Endothelial cell of umbilical vein (primary cell): ENCODE measurements at regions of chr1 and their contacts with region 1.

Region 1: DNA sequence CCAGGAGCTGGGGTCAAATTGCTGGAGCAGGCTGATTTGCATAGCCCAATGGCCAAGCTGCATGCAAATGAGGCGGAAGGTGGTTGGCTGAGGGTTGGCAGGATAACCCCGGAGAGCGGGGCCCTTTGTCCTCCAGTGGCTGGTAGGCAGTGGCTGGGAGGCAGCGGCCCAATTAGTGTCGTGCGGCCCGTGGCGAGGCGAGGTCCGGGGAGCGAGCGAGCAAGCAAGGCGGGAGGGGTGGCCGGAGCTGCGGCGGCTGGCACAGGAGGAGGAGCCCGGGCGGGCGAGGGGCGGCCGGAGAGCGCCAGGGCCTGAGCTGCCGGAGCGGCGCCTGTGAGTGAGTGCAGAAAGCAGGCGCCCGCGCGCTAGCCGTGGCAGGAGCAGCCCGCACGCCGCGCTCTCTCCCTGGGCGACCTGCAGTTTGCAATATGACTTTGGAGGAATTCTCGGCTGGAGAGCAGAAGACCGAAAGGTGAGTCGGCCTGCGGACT is at the start of gene GADD45A:
- DNase-seq: peak; percentile 99
- H3K4me3 ChIP-seq: peak within 1 kb of the TSS; percentile 77 to 85 (median 83)
- H3K27ac ChIP-seq: peak within 1 kb of the TSS; percentile 90
- H3K4me1 ChIP-seq: peaks cover 43% of the 10 kb centered on the region
- H3K27me3 ChIP-seq: no peaks in the 10 kb centered on the region
- CTCF ChIP-seq: no peak
- POLR2A ChIP-seq: peak; percentile 100
- total RNA-seq, gene GADD45A: 77.4 and 91.6 TPM in 2 replicates

Region 2: DNA sequence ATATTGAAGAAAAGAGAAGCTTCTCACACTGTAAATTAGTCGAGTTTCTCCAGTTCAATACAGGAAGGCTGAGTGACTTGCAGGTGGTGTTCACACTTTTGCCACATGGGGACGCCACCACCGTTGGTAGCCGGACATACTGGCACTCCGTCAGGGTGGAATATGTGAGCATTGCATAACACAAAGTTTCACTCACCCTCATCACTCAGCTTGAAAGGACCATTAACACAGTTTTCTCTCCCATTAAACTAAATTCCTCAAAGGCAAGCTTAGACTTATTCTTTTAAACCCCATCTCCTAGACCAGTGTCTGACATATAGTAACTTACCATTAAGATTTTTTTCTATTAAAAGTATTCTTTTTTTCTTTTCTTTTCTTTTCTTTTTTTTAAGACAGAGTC is 149.6 kb before region 1 on chr1:
- CTCF ChIA-PET with region 1: interaction called, 64 read pairs
- POLR2A ChIA-PET with region 1: interaction called, 4 read pairs
- dilution Hi-C with region 1: no loop called
- intact Hi-C with region 1: loop called (anchors 1 kb)
- DNase-seq: peak; percentile 92
- H3K4me3 ChIP-seq: no peak overlapping the region
- H3K27ac ChIP-seq: no peak overlapping the region
- H3K4me1 ChIP-seq: peaks cover 10% of the 10 kb centered on the region
- H3K27me3 ChIP-seq: no peaks in the 10 kb centered on the region
- CTCF ChIP-seq: peak; percentile 93 to 94
- POLR2A ChIP-seq: no peak

Region 3: GRCh38 chr1:67590329-67590728 is 94.8 kb before region 1 on chr1:
- CTCF ChIA-PET with region 1: no interaction called
- POLR2A ChIA-PET with region 1: no interaction called
- dilution Hi-C with region 1: no loop called
- intact Hi-C with region 1: loop called (anchors 1 kb)
- DNase-seq: peak; percentile 97
- H3K4me3 ChIP-seq: no peak overlapping the region
- H3K27ac ChIP-seq: peak overlapping the region; percentile 38
- H3K4me1 ChIP-seq: peaks cover 3% of the 10 kb centered on the region
- H3K27me3 ChIP-seq: no peaks in the 10 kb centered on the region
- CTCF ChIP-seq: no peak
- POLR2A ChIP-seq: no peak

Region 4: DNA sequence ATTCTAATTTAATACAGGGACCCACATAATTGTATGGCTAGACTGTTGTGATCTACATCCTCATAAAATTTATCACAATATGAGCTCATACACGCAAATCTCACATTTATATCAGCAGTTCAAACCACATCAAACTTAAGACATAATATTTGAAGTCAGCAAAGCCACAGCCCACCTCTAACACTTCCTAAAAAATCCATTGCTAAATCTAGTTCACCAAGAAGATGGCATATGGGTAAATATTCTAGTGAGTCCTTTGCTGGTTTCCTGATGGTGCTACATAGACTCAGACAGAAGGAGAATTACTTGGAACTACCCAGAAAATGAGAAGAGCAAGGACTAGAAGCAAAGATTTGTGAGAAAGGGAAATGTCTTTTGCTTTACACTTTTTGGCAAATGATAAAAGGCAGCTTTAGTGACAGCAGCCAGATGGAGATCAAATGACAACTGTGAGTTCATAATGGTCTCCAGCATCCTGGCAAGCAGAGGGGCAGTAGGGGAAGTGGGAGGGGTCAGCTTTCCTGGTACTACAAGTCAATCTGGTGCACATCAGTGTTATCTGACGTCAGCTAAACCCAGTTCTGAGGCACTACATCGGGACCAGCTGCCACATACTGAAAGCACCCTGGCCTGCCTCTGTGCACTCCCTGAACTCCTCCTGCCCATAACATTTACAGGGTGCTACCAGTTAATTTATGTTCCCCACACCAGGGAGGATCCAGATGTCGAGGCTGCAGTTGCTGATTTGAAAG is 10.7 kb before region 1 on chr1:
- CTCF ChIA-PET with region 1: interaction called, 12 read pairs
- POLR2A ChIA-PET with region 1: interaction called, 22 read pairs
- dilution Hi-C with region 1: no loop called
- intact Hi-C with region 1: loop called (anchors 1 kb)
- DNase-seq: peak; percentile 96
- H3K4me3 ChIP-seq: no peak overlapping the region
- H3K27ac ChIP-seq: peak overlapping the region; percentile 69
- H3K4me1 ChIP-seq: peaks cover 18% of the 10 kb centered on the region
- H3K27me3 ChIP-seq: no peaks in the 10 kb centered on the region
- CTCF ChIP-seq: no peak
- POLR2A ChIP-seq: no peak

Region 5: DNA sequence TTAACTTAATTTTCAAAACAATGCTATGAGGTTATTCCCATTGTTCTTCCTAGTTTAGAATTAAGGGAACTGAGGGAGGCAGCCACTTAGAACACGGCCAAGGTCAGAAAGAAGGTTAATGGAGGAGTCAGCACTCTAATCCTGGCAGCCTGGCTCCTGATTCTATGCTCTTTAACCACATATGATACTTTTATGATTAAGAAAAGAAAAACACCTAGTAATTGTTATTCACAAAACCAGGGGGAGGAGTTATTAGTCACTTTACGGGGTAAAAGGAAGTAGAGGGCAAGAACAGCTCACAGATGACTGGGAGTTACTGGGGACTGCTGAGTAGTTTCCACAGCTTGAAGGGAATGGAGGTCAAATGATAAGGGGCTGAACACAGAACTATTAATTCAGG is 38.5 kb after region 1 on chr1:
- CTCF ChIA-PET with region 1: interaction called, 6 read pairs
- POLR2A ChIA-PET with region 1: interaction called, 7 read pairs
- dilution Hi-C with region 1: no loop called
- intact Hi-C with region 1: loop called (anchors 1 kb)
- DNase-seq: peak; percentile 97
- H3K4me3 ChIP-seq: peak overlapping the region in 1 of 3 experiments; percentile 17
- H3K27ac ChIP-seq: peak overlapping the region; percentile 95
- H3K4me1 ChIP-seq: peaks cover 68% of the 10 kb centered on the region
- H3K27me3 ChIP-seq: no peaks in the 10 kb centered on the region
- CTCF ChIP-seq: no peak
- POLR2A ChIP-seq: peak; percentile 40

Region 6: DNA sequence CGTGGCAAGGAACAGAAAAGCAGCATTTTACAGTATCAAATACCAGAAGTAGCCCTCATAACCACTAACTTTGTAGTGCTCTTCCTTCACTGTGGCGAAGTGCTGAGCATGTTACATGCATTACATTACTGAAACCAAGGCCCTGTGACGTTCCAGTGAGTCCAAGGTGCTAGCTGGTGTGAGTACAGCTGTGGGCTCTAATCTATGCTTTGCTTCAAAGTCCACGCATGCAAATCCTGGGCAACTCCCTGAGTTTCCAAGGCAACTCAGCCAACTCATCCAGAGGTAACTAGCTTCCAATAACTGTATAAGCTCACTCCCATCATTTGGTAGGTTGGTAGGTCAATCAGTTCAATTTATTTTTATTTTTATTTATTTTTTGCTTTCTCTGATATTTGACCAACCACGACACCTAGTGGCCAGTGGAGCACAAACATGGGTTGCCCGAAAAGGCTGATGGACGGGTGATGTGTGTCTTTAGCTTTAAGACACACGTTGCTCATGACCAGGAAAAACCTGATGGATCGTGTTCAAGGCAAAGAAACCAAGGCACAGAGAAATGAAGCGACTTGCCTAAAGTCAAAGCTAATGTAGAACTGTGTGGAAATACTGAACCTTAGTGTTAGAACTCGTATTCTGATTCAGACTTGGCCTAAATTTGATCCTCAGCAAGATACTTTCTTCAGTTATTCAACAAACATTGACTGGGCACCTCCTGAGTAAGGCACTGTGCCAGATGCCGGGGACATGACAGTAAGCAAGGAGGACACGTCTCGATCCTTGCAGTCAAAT is 75.1 kb after region 1 on chr1:
- CTCF ChIA-PET with region 1: interaction called, 87 read pairs
- POLR2A ChIA-PET with region 1: interaction called, 20 read pairs
- dilution Hi-C with region 1: no loop called
- intact Hi-C with region 1: loop called (anchors 1 kb)
- DNase-seq: peak; percentile 78
- H3K4me3 ChIP-seq: no peak overlapping the region
- H3K27ac ChIP-seq: peak overlapping the region; percentile 24
- H3K4me1 ChIP-seq: peaks cover 7% of the 10 kb centered on the region
- H3K27me3 ChIP-seq: no peaks in the 10 kb centered on the region
- CTCF ChIP-seq: peak; percentile 67 to 85
- POLR2A ChIP-seq: no peak

Region 7: GRCh38 chr1:67847466-67847865 is 162.4 kb after region 1 on chr1:
- CTCF ChIA-PET with region 1: interaction called, 3 read pairs
- POLR2A ChIA-PET with region 1: interaction called, 3 read pairs
- dilution Hi-C with region 1: no loop called
- intact Hi-C with region 1: loop called (anchors 2 kb)
- DNase-seq: peak; percentile 97
- H3K4me3 ChIP-seq: no peak overlapping the region
- H3K27ac ChIP-seq: peak overlapping the region; percentile 98
- H3K4me1 ChIP-seq: peaks cover 40% of the 10 kb centered on the region
- H3K27me3 ChIP-seq: no peaks in the 10 kb centered on the region
- CTCF ChIP-seq: no peak
- POLR2A ChIP-seq: no peak

Region 8: DNA sequence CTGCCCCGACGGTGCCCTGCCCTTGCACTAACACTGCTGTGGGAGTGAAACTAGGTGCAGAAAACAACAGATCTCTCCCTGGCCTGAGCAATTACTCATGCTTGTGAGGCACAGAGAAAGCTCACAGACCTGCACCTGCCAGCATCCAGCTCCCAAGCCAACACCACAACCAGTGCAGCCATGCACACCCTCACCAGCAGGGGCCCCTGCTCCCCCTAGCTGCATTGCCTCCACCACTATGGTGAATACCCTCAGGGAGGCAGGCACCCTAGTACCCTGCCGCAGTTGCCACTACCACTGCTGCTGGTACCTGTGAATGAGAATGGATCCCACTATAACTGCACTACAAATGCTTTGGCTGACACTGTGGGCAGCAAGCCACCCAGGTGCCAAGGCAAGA is 372.5 kb after region 1 on chr1:
- CTCF ChIA-PET with region 1: no interaction called
- POLR2A ChIA-PET with region 1: no interaction called
- dilution Hi-C with region 1: no loop called
- intact Hi-C with region 1: no loop called
- DNase-seq: no peak
- H3K4me3 ChIP-seq: no peak overlapping the region
- H3K27ac ChIP-seq: no peak overlapping the region
- H3K4me1 ChIP-seq: no peaks in the 10 kb centered on the region
- H3K27me3 ChIP-seq: no peaks in the 10 kb centered on the region
- CTCF ChIP-seq: no peak
- POLR2A ChIP-seq: no peak

Region 9: GRCh38 chr1:68301471-68302001 is 616.4 kb after region 1 on chr1:
- CTCF ChIA-PET with region 1: no interaction called
- POLR2A ChIA-PET with region 1: no interaction called
- dilution Hi-C with region 1: no loop called
- intact Hi-C with region 1: no loop called
- DNase-seq: no peak
- H3K4me3 ChIP-seq: no peak overlapping the region
- H3K27ac ChIP-seq: no peak overlapping the region
- H3K4me1 ChIP-seq: no peaks in the 10 kb centered on the region
- H3K27me3 ChIP-seq: peaks cover 4% of the 10 kb centered on the region in 2 experiments
- CTCF ChIP-seq: no peak
- POLR2A ChIP-seq: no peak